T-cell (primary cell): ENCODE measurements at regions of chr17 and their contacts with region 1.

Region 1: GRCh38 chr17:65830356-65830755 is 268.9 kb upstream of the AXIN2 start:
- DNase-seq: no peak
- ATAC-seq: no peak
- H3K4me3 ChIP-seq: no peak overlapping the region
- H3K4me3 Mint-ChIP-seq: no peak overlapping the region
- H3K27ac ChIP-seq: no peak overlapping the region
- H3K27ac Mint-ChIP-seq: no peak overlapping the region
- H3K4me1 ChIP-seq: peaks cover 0 to 4% of the 10 kb centered on the region in 2 experiments
- H3K4me1 Mint-ChIP-seq: peaks cover 0 to 6% (median under 1%) of the 10 kb centered on the region in 3 donors
- H3K27me3 ChIP-seq: no peaks in the 10 kb centered on the region
- H3K27me3 Mint-ChIP-seq: peaks cover 2 to 14% of the 10 kb centered on the region in 2 donors

Region 2: DNA sequence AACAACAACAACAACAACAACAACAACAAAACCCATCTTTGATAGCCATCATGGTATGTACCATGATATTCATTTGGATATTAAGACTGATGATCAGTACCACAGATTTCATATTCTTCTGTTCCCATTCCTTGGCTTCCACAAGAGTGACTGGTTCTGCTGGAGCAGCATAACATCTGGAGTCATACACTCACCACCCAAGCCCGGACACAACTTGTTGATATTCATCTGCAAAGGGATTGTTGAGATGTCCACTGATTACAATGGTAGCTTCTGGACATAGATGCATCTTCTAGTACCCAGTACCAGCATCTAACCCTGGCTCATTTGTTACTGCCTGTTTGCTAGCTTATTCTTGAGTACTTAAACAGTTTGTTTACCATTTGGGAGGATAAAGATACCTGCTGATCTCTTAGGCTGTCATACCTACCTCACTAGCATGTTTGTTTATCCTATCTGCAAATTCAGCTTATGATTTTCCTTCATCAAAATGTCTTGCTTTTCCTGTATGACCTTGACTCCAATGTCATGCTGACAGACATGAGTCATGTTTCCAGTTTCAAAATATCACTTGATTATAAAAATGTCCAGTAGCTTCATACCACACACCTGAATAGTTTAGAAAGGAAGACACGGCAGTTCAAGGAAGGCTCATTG is 33.2 kb before region 1 on chr17:
- CTCF ChIA-PET with region 1: no interaction called
- POLR2A ChIA-PET with region 1: interaction called in 1 of 2 experiments, 12 read pairs
- DNase-seq: no peak
- ATAC-seq: no peak
- H3K4me3 ChIP-seq: no peak overlapping the region
- H3K4me3 Mint-ChIP-seq: no peak overlapping the region
- H3K27ac ChIP-seq: no peak overlapping the region
- H3K27ac Mint-ChIP-seq: no peak overlapping the region
- H3K4me1 ChIP-seq: peaks cover 0 to 2% of the 10 kb centered on the region in 2 experiments
- H3K4me1 Mint-ChIP-seq: no peaks in the 10 kb centered on the region
- H3K27me3 ChIP-seq: no peaks in the 10 kb centered on the region
- H3K27me3 Mint-ChIP-seq: no peaks in the 10 kb centered on the region

Region 3: GRCh38 chr17:65813306-65813705 is 17.1 kb before region 1 on chr17:
- CTCF ChIA-PET with region 1: no interaction called
- POLR2A ChIA-PET with region 1: no interaction called
- DNase-seq: no peak
- ATAC-seq: no peak
- H3K4me3 ChIP-seq: no peak overlapping the region
- H3K4me3 Mint-ChIP-seq: no peak overlapping the region
- H3K27ac ChIP-seq: no peak overlapping the region
- H3K27ac Mint-ChIP-seq: no peak overlapping the region
- H3K4me1 ChIP-seq: no peaks in the 10 kb centered on the region
- H3K4me1 Mint-ChIP-seq: peaks cover 0 to 5% (median 0%) of the 10 kb centered on the region in 3 donors
- H3K27me3 ChIP-seq: no peaks in the 10 kb centered on the region
- H3K27me3 Mint-ChIP-seq: peaks cover 2 to 28% of the 10 kb centered on the region in 2 donors